ENCODE measurements at regions of chr5 and their contacts with region 1.

Region 1: GRCh38 chr5:52657247-52657645 is 130.5 kb upstream of the ITGA1 start:
- DNase-seq: no peak
- ATAC-seq: no peak
- H3K4me3 Mint-ChIP-seq: no peak overlapping the region
- H3K27ac Mint-ChIP-seq: no peak overlapping the region
- H3K4me1 Mint-ChIP-seq: no peaks in the 10 kb centered on the region
- H3K27me3 Mint-ChIP-seq: peaks cover 8% of the 10 kb centered on the region

Region 2: DNA sequence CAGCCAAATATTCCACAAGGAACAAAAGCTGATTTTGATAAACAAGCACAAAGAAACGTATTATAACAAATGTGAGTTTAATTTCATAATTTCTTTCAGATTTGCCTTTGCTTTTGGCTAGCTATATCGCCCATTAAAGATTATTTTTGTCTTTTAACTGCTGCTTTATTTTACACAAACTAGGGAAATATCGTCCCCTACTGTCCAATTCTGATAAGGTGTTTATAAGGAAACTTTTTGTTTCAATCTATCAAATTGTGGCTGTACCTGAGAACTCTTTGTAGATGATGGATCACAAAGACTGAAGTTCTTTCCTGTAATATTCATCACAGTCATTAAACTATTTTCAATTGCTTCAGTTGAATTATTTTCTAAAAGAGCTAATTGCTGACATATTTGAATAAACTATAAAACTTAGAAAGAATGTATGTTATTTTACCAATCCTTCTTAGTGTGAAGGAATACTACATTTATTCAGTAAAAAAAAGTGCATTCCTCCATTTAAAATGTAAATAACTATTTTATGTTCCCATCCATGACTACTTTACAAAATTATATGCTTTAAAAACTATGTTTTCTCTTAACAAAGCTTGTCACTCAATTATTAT is 300.8 kb before region 1 on chr5:
- CTCF ChIA-PET with region 1: no interaction called
- POLR2A ChIA-PET with region 1: no interaction called
- intact Hi-C with region 1: loop called in 1 of 2 experiments (anchors 10 kb)
- DNase-seq: no peak
- ATAC-seq: no peak
- H3K4me3 Mint-ChIP-seq: no peak overlapping the region
- H3K27ac Mint-ChIP-seq: no peak overlapping the region
- H3K4me1 Mint-ChIP-seq: no peaks in the 10 kb centered on the region
- H3K27me3 Mint-ChIP-seq: no peaks in the 10 kb centered on the region